Activated naive CD4-positive, alpha-beta T cell treated with anti-CD3 and anti-CD28 coated beads for 36 hours (primary cell): ENCODE measurements at regions of chr9 and their contacts with region 1.

Region 1: GRCh38 chr9:4904322-4905134 is 80.5 kb upstream of the JAK2 start:
- DNase-seq: no peak
- H3K4me3 Mint-ChIP-seq: no peak overlapping the region
- H3K27ac Mint-ChIP-seq: no peak overlapping the region
- H3K4me1 Mint-ChIP-seq: peaks cover 13% of the 10 kb centered on the region
- H3K27me3 Mint-ChIP-seq: no peaks in the 10 kb centered on the region

Region 2: DNA sequence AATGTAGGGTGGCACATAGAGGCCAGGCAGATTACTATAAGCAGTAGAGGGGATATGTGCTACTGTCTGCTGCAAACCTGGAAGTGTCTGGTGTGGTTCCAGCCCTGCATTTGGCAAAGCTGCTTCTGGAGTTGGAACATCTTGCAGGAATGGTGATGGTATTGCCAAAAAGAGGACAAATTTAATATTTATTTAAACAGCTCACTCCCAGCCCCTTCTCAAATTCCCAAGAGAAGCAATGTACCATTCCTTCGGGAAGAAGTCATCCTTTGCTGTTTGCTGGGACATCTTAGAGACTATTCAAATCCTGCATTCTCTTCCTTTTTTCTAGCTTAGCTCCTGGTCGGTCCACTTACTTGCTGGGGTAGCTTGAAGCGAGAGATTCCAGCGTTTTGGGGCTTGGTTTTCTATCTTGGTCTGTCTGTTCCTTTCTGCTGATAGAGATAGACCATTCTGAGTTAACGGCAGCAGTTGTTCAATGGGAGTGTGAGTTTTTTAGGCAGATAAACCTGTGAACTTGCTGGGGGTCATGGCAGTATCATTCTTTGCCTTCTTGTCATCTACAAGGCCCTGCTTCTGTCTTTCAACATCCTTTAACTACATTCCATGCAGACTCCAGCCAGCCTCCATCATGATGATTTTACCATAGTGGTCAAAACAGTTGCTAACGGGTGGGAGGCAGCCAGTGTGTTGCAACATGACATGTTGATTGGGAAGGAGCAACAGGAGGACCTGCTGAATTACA is 41.9 kb before region 1 on chr9:
- CTCF ChIA-PET with region 1: interaction called, 3 read pairs
- intact Hi-C with region 1: loop called (anchors 5 kb)
- DNase-seq: no peak
- H3K4me3 Mint-ChIP-seq: no peak overlapping the region
- H3K27ac Mint-ChIP-seq: no peak overlapping the region
- H3K4me1 Mint-ChIP-seq: peaks cover 11% of the 10 kb centered on the region
- H3K27me3 Mint-ChIP-seq: no peaks in the 10 kb centered on the region